Activated B cell treated with CpG ODN at 0.5 μM for 24 hours (primary cell): ENCODE measurements at regions of chr16 and their contacts with region 1.

Region 1: GRCh38 chr16:3611146-3611975 is at the start of gene SLX4:
- DNase-seq: peak; percentile 95
- ATAC-seq: peak; percentile 85
- H3K4me3 Mint-ChIP-seq: peak within 1 kb of the TSS; percentile 100
- H3K27ac Mint-ChIP-seq: peak within 1 kb of the TSS; percentile 96
- H3K4me1 Mint-ChIP-seq: peaks cover 60% of the 10 kb centered on the region
- H3K27me3 Mint-ChIP-seq: no peaks in the 10 kb centered on the region
- CTCF ChIP-seq: no peak
- total RNA-seq, gene SLX4: 11.4 and 13.0 TPM in 2 replicates

Region 2: GRCh38 chr16:3534126-3534525 is 77.2 kb before region 1 on chr16:
- CTCF ChIA-PET with region 1: no interaction called
- POLR2A ChIA-PET with region 1: no interaction called
- intact Hi-C with region 1: no loop called
- DNase-seq: no peak
- ATAC-seq: no peak
- H3K4me3 Mint-ChIP-seq: no peak overlapping the region
- H3K27ac Mint-ChIP-seq: no peak overlapping the region
- H3K4me1 Mint-ChIP-seq: peaks cover 22% of the 10 kb centered on the region
- H3K27me3 Mint-ChIP-seq: no peaks in the 10 kb centered on the region
- CTCF ChIP-seq: no peak

Region 3: GRCh38 chr16:3548445-3548844 is 62.9 kb before region 1 on chr16:
- CTCF ChIA-PET with region 1: no interaction called
- POLR2A ChIA-PET with region 1: no interaction called
- intact Hi-C with region 1: loop called (anchors 1 kb)
- DNase-seq: peak; percentile 28
- ATAC-seq: peak; percentile 95
- H3K4me3 Mint-ChIP-seq: peak overlapping the region; percentile 9
- H3K27ac Mint-ChIP-seq: peak overlapping the region; percentile 79
- H3K4me1 Mint-ChIP-seq: peaks cover 43% of the 10 kb centered on the region
- H3K27me3 Mint-ChIP-seq: no peaks in the 10 kb centered on the region
- CTCF ChIP-seq: no peak

Region 4: DNA sequence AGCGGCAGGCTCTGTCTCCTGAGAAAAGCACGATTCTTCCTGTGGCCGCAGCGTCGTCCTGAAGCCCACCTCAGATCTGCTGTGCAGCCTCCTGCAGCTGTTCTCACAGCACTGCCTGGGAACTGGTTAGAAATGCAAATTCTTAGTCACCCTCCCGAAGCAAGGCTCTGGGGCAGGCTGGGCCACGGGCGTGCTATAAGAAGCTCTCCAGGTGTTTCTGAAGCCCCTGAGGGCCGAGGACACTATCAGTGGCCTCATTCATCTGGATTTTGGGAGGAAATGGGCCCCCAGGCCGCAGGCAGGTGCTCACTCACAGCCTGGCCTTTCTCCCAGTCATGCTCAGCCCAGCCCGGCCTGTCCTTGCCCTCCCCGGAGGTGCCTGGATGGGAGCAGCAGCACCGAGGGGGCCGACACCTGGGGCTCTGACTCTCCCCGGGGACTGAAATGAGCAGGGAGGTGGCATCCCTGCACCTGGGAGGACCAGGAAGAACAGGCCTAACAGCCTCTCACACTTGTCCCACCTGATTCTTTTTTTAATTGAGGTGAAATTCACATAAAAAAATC is 23.7 kb before region 1 on chr16:
- CTCF ChIA-PET with region 1: no interaction called
- POLR2A ChIA-PET with region 1: interaction called, 4 read pairs
- intact Hi-C with region 1: loop called (anchors 2 kb)
- DNase-seq: no peak
- ATAC-seq: peak; percentile 90
- H3K4me3 Mint-ChIP-seq: no peak overlapping the region
- H3K27ac Mint-ChIP-seq: no peak overlapping the region
- H3K4me1 Mint-ChIP-seq: peaks cover 22% of the 10 kb centered on the region
- H3K27me3 Mint-ChIP-seq: no peaks in the 10 kb centered on the region
- CTCF ChIP-seq: no peak

Region 5: DNA sequence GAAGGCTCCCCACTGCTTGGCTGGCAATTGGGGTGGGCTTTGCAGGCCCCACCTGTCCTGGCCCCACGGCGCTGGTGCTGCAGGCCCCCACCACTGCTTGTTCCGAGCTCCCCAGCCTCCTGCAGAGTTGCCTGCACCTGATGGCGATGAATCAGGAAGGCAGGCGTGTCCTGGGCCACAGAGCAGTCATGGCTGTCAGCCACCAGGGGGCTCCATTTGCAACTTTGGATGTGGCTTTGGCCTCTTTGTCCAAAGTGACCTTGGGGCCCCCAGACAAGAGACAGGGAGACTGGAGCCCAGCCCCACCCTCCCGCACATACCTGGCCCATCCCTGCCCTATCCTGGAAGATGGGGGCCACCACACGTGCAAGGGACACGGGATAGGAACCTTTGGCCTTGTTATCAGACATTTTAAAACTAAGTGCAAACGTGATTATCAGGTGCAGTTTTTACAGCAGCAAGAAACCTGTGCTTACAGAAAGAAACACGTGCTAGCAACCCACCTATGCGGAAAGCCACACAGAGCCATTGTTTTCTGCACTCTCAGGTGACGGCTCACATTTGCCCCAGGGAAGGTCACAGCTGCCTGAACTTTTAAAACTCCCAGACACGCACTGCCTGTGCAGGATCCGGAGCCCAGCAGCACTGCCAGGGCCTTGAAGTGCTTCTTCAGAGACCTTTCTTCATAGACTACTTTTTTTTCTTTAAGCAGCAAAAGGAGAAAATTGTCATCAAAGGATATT is 43.1 kb after region 1 on chr16 and contains the start of gene DNASE1:
- CTCF ChIA-PET with region 1: interaction called, 3 read pairs
- POLR2A ChIA-PET with region 1: no interaction called
- intact Hi-C with region 1: loop called (anchors 1 kb)
- DNase-seq: peak; percentile 40
- ATAC-seq: peak; percentile 87
- H3K4me3 Mint-ChIP-seq: no peak within 1 kb of the TSS
- H3K27ac Mint-ChIP-seq: peak within 1 kb of the TSS; percentile 50
- H3K4me1 Mint-ChIP-seq: peaks cover 2% of the 10 kb centered on the region
- H3K27me3 Mint-ChIP-seq: no peaks in the 10 kb centered on the region
- CTCF ChIP-seq: no peak
- total RNA-seq, gene DNASE1: 25.6 and 28.5 TPM in 2 replicates